Panc1 (cell line): ENCODE measurements at regions of chr12 and their contacts with region 1.

Region 1: DNA sequence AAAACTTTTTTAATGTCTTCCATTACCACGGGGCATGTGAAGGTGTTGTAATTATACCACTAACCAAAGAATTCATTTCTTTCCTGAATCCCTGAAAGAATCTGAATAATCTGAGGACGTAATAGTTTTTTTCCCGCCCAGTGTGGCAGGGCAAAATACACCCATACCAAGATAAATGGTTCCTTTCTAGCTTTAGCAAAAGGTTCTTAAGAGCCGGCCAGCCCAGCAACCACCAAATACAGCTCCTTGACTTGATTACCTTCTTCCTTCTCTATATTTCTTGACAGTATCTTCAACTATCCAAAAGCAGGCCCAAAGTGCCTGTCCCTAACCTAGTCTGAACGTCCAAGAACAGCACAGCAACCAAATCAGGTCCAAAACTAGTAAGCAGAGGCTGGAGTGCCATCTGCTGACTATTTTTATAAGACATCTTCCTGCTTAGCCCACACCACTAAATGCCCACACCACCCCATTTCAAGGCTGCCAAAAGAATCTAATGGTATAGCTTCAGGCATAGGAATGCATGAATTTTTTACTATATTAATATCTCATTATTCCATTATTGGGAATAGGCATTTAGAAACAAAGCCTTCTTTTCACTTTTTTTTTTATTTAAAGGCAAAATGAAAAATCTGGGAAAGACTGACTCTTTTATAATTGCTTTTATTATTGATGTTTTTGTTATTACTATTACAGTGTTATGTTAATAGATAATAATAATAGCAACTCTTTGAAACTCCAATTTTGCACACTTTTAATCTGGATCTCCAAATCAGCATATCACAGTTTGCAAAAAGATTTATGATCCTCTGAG is 524.4 kb downstream of the MED13L start:
- DNase-seq: peak; percentile 27
- ATAC-seq: peak; percentile 85
- H3K4me3 ChIP-seq: no peak overlapping the region
- H3K27ac ChIP-seq: no peak overlapping the region
- H3K4me1 ChIP-seq: no peaks in the 10 kb centered on the region
- H3K27me3 ChIP-seq: peaks cover 31% of the 10 kb centered on the region
- CTCF ChIP-seq: peak; percentile 78

Region 2: DNA sequence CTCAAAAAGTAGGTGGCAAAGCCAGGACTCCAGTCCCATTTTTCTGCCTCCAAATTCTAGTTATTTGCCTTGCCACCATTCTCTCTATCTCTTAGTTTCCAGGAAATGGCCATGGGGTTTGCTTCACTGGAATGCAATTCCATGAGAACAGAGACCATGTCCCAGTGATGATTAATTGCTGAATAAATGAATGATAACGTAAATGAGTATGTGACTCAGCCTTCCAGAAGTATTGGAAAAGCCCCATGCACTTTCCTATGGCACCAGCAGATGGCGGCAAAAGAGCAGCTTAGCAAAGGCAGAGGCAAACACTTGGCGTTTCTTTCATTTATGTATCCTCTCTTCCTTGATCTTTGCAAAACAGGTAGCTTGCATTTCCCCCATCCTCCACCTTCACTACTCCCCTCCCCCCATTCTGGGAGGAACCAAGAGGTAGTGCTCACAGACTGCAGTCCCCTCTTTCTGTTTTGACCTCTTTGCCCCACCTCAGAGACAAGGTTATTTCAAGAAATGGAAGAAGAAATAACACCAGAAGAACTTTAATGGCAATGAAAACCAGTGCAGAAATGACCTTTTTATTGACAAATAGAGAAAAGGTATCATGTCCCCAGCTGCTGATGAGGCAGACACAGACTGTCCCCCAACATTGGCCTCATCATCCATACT is 1090.5 kb before region 1 on chr12:
- CTCF ChIA-PET with region 1: interaction called, 4 read pairs
- POLR2A ChIA-PET with region 1: no interaction called
- in situ Hi-C with region 1: no loop called
- intact Hi-C with region 1: loop called (anchors 2 kb)
- DNase-seq: peak; percentile 64
- ATAC-seq: peak; percentile 74
- H3K4me3 ChIP-seq: no peak overlapping the region
- H3K27ac ChIP-seq: no peak overlapping the region
- H3K4me1 ChIP-seq: no peaks in the 10 kb centered on the region
- H3K27me3 ChIP-seq: no peaks in the 10 kb centered on the region; the same call in 1 of the 2 replicates
- CTCF ChIP-seq: peak; percentile 91

Region 3: DNA sequence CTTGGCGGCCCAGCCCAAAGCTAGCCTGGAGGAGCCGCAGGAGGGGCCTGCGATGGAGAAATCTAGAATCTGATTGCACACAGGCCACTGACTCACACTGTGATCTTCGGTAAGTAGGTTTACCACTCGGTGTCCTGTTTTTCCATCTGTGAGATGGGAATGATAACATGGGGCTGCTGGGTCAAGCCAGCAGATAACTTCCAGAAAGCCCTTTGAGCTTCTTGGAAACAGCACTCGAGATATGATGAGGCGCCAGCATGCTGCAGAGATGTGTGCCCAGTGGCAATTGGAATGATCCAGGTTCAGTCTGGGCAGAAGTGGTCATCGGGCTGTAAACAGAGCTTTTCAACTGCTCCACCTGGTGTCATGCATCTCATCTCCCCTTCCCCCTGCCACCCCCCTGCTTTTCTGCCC is 297.8 kb before region 1 on chr12:
- CTCF ChIA-PET with region 1: interaction called, 10 read pairs
- POLR2A ChIA-PET with region 1: no interaction called
- in situ Hi-C with region 1: no loop called
- intact Hi-C with region 1: no loop called
- DNase-seq: no peak
- ATAC-seq: no peak
- H3K4me3 ChIP-seq: no peak overlapping the region
- H3K27ac ChIP-seq: no peak overlapping the region
- H3K4me1 ChIP-seq: no peaks in the 10 kb centered on the region
- H3K27me3 ChIP-seq: peaks cover 3% of the 10 kb centered on the region
- CTCF ChIP-seq: no peak

Region 4: DNA sequence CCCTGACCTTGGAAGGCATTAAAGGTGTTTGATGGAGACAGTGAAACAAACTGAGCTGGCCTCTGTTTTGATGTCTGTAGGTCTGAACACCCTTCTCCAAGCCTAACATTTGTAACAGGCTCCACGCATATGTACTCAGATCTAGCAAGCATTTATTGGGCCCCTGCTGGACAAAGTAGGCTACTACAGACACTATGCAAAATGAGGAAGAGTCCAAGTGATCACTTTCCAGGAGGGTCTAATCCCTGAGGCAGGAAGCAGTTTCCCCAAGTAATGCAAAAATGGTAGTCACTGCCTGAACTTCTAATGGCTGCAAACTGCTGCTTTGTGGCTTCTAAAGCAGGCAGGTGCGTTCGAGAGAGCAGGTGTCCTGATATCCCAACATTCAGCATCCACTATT is 118.6 kb after region 1 on chr12:
- CTCF ChIA-PET with region 1: no interaction called
- POLR2A ChIA-PET with region 1: no interaction called
- in situ Hi-C with region 1: no loop called
- intact Hi-C with region 1: no loop called
- DNase-seq: peak; percentile 10
- ATAC-seq: peak; percentile 81
- H3K4me3 ChIP-seq: no peak overlapping the region
- H3K27ac ChIP-seq: no peak overlapping the region
- H3K4me1 ChIP-seq: no peaks in the 10 kb centered on the region
- H3K27me3 ChIP-seq: peaks cover 4% of the 10 kb centered on the region
- CTCF ChIP-seq: peak; percentile 75